ENCODE measurements at regions of chr12 and their contacts with region 1.

Region 1: DNA sequence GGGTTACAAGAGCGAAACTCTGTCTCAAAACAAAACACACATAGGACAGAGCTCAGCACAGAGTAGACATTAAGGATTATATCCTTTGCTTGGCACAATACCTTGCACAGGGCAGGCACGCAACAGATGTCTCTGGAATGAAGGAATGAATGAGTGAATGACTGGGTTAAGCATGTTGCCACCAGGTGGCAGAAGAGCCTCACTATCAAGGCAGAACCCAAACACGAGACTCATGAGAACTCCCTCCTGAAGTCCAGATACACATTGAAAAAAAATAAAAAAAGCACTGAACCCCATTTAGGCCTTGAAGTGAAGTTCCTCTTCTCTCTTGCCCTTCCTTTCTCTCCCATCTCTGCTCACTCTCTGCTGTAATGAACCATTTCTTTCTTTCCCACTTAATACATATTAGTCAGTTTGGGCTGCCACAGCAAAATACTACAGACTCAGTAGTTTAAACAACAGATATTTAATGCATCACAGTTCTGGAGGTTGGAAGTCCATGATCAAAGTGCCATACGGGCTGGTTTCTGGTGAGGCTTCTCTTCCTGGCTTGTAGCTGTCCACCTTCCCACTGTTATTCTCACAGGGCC is 26.6 kb upstream of the LTA4H start:
- DNase-seq: peak; percentile 60
- H3K4me3 Mint-ChIP-seq: no peak overlapping the region
- H3K27ac Mint-ChIP-seq: no peak overlapping the region
- H3K4me1 Mint-ChIP-seq: peaks cover 22% of the 10 kb centered on the region
- H3K27me3 Mint-ChIP-seq: no peaks in the 10 kb centered on the region

Region 2: DNA sequence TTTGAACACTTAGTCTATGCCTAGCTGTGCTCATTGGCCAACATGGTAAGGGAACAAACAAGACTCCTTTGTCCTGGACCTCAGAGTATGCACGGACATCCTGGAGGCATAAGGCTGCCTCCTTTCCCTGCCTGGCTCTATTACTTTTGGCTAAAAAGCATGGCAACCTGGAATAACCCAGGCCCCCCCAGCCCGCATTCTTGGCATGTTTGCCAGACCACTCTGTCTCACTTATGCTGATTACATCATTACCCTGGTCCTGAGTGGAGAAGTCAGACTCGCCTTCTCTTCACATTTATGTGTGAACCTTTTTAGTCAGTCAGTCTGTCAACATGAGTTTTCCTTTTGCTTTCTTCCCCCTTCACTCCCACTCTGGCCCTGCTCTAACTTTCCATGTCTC is 74.2 kb after region 1 on chr12:
- intact Hi-C with region 1: loop called (anchors 2 kb)
- DNase-seq: no peak
- H3K4me3 Mint-ChIP-seq: no peak overlapping the region
- H3K27ac Mint-ChIP-seq: no peak overlapping the region
- H3K4me1 Mint-ChIP-seq: peaks cover 23% of the 10 kb centered on the region
- H3K27me3 Mint-ChIP-seq: peaks cover 4% of the 10 kb centered on the region

Region 3: DNA sequence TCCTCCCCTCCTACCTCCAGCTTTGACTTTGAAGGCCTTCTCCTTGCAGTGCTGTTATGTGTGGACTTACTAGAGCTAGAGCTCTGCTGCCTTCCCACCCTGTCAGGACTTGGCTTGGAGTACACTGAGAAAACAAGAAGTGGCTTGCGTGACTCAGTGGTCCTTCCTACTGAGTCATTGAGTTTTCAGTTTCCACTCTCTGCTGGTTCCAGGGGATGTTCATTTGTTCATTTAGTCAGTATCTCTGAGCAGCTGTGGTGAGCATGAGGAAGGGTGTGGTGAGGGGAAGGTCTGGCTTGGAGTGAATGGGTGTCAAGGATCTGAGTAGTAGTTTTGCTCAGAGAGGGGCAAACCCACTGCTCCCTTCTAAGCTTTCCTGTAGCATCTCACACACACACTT is 115.1 kb after region 1 on chr12:
- intact Hi-C with region 1: loop called (anchors 1 kb)
- DNase-seq: peak; percentile 60
- H3K4me3 Mint-ChIP-seq: peak overlapping the region; percentile 11
- H3K27ac Mint-ChIP-seq: peak overlapping the region; percentile 53
- H3K4me1 Mint-ChIP-seq: peaks cover 18% of the 10 kb centered on the region
- H3K27me3 Mint-ChIP-seq: no peaks in the 10 kb centered on the region

Measured in activated T-helper 2 cell treated with anti-CD3 and anti-CD28 coated beads, Interferon-gamma antibody, Interleukin-2, Interleukin-4, amounts not matched to agents 10 μg/mL and 5 μg/mL and 100 μg/mL, durations not matched to agents 14 hours and 24 hours and 36 hours (primary cell).